PC-3 (cell line): ENCODE measurements at regions of chr12 and their contacts with region 1.

Region 1: DNA sequence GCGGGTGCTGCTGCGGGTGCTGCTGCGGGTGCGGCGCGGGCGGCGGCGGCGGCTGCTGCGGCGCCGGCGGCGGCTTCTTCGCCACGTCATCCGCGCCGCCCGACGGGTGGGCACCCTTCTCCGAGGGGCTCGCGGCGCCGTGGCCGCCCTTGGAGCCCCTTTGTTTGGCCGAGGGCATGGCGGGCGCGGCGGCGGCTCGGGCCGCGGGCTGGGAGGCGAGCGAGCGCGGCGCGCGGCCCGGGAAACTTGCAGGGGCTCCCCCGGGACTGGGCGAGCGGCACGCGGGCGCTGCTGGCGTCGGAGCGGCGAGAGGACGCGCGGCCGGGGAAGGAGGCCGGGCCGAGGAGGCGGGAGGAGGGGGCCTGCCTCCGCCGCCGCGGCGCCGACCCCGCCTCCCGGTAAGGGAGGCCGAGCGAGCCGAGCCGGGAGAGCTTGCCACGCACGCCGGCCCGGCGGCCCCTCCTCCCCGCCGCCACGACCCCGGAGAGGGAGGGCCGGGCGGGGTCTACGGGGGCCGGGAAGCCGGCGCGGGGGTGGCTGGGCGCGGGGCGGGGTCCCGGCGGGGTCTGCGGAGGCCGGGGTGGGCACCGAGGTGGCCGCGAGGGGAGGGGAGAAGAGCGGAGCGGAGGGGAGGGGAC is at the start of gene CKAP4:
- DNase-seq: peak; percentile 82
- ATAC-seq: peak; percentile 63
- H3K4me3 ChIP-seq: peak within 1 kb of the TSS; percentile 73
- H3K27ac ChIP-seq: peak within 1 kb of the TSS; percentile 93
- H3K4me1 ChIP-seq: peaks cover 24% of the 10 kb centered on the region
- H3K27me3 ChIP-seq: no peaks in the 10 kb centered on the region
- CTCF ChIP-seq: no peak
- total RNA-seq, gene CKAP4: 76.3 and 99.1 TPM in 2 replicates

Region 2: GRCh38 chr12:104816845-104817503 is 1430.8 kb before region 1 on chr12:
- CTCF ChIA-PET with region 1: no interaction called
- POLR2A ChIA-PET with region 1: no interaction called
- intact Hi-C with region 1: no loop called
- DNase-seq: peak; percentile 48
- ATAC-seq: peak; percentile 65
- H3K4me3 ChIP-seq: no peak overlapping the region
- H3K27ac ChIP-seq: no peak overlapping the region
- H3K4me1 ChIP-seq: no peaks in the 10 kb centered on the region
- H3K27me3 ChIP-seq: no peaks in the 10 kb centered on the region
- CTCF ChIP-seq: no peak

Region 3: GRCh38 chr12:106195621-106196027 is 52.2 kb before region 1 on chr12:
- CTCF ChIA-PET with region 1: no interaction called
- POLR2A ChIA-PET with region 1: no interaction called
- intact Hi-C with region 1: no loop called
- DNase-seq: no peak
- ATAC-seq: no peak
- H3K4me3 ChIP-seq: no peak overlapping the region
- H3K27ac ChIP-seq: no peak overlapping the region
- H3K4me1 ChIP-seq: no peaks in the 10 kb centered on the region
- H3K27me3 ChIP-seq: peaks cover 16% of the 10 kb centered on the region; the same call in 1 of the 2 replicates
- CTCF ChIP-seq: no peak

Region 4: GRCh38 chr12:106223485-106224354 is 24.1 kb before region 1 on chr12:
- CTCF ChIA-PET with region 1: interaction called, 3 read pairs
- POLR2A ChIA-PET with region 1: no interaction called
- intact Hi-C with region 1: loop called (anchors 1 kb)
- DNase-seq: peak; percentile 89
- ATAC-seq: peak; percentile 80
- H3K4me3 ChIP-seq: no peak overlapping the region
- H3K27ac ChIP-seq: no peak overlapping the region
- H3K4me1 ChIP-seq: peaks cover 11% of the 10 kb centered on the region
- H3K27me3 ChIP-seq: no peaks in the 10 kb centered on the region
- CTCF ChIP-seq: peak; percentile 94

Region 5: DNA sequence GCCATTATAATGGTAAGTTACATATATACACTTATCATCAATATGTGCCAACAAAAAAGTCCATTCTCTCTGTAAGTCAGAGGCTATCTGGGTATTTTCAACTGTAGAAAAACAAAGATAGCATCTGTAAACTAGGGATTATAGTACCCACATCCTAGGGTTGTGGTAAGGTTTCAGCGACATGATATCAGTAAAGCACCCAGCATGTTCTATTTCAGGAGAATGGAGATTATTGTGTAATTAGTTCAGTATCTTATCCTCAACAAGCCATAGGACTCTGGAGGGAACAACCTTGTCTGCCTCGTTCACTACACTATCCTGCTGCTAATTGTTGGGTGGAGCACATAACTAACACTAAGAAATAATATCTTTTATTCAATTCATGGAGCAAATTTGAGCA is 19.7 kb after region 1 on chr12:
- CTCF ChIA-PET with region 1: no interaction called
- POLR2A ChIA-PET with region 1: no interaction called
- intact Hi-C with region 1: no loop called
- DNase-seq: no peak
- ATAC-seq: no peak
- H3K4me3 ChIP-seq: no peak overlapping the region
- H3K27ac ChIP-seq: no peak overlapping the region
- H3K4me1 ChIP-seq: no peaks in the 10 kb centered on the region
- H3K27me3 ChIP-seq: no peaks in the 10 kb centered on the region
- CTCF ChIP-seq: no peak

Region 6: GRCh38 chr12:106282457-106283097 is 34.8 kb after region 1 on chr12:
- CTCF ChIA-PET with region 1: interaction called, 3 read pairs
- POLR2A ChIA-PET with region 1: interaction called, 5 read pairs
- intact Hi-C with region 1: loop called (anchors 1 kb)
- DNase-seq: peak; percentile 78
- ATAC-seq: peak; percentile 71
- H3K4me3 ChIP-seq: no peak overlapping the region
- H3K27ac ChIP-seq: no peak overlapping the region
- H3K4me1 ChIP-seq: peaks cover 33% of the 10 kb centered on the region
- H3K27me3 ChIP-seq: no peaks in the 10 kb centered on the region
- CTCF ChIP-seq: peak; percentile 94

Region 7: DNA sequence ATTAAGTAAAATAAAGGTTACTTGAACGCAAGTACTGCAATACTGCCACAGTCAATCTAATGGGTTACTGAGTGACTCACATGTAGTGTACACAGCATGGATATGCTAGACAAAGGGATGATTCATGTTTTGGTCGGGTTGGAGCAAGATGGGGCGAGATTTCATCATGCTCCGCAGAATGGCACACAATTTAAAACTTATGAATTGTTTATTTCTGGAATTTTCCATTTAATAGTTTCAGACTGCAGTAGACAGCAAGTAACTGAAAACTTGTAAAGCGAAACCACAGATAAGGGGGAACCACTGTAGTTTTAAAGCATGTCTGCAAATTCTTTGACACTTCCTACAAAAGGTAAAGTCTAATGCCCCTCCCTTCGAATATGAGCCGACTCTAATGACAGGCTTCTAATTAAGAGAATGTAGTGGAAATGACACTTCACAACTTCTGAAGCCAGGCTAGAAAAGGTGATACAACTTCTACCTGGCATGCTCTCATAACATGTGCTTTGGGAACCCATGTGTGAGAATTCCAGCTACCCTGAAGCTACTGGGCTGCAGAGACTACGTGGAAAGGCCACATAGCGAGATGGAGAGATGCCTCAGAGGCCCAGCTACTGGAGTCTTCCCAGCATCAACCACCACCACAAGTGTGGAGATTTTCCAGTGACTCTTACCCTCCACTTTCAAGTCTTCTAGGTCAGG is 40.9 kb after region 1 on chr12:
- CTCF ChIA-PET with region 1: no interaction called
- POLR2A ChIA-PET with region 1: interaction called, 5 read pairs
- intact Hi-C with region 1: loop called (anchors 1 kb)
- DNase-seq: peak; percentile 97
- ATAC-seq: peak; percentile 92
- H3K4me3 ChIP-seq: no peak overlapping the region
- H3K27ac ChIP-seq: peak overlapping the region; percentile 96
- H3K4me1 ChIP-seq: peaks cover 50% of the 10 kb centered on the region
- H3K27me3 ChIP-seq: no peaks in the 10 kb centered on the region
- CTCF ChIP-seq: no peak

Region 8: DNA sequence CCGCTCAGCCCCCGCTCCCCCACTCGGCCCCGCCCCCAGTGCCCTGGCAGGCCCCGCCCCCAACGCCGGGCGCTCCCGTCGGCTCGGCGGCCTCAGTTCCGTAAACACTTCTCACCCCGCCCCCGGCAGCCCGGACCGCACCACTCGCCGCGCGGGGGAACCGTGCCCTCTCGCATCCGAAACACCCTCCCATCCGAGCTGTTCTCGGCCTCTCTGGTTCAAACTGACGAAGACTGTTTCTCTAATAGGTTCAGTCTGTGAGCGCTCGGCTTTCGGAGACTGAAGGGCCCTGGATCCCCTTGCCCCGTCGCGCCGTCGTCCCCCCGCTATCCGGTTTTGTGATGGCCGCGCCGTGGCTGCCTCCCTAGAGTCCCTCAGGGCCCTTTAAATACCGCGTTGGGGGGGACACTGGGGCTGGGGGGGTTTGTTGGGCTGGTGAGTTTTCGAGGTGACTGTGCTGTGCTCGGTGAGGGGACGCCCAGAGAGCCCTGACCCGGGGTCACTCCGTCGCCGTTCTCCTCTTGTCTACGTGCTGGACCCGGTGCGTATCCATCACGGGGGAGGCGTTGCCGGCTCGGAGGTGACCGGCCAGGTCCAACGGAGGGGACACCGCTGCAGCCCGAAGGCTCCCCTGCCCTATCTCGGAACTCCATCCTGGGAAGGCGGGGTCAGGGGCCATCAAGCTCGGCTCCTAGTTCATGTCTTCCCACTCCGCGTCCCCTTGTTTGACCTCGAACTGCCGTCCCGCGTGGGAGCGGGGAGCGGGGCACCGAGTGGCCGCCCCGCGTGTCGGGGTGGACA is 54.8 kb after region 1 on chr12 and contains the start of gene TCP11L2:
- CTCF ChIA-PET with region 1: no interaction called
- POLR2A ChIA-PET with region 1: interaction called, 9 read pairs
- intact Hi-C with region 1: loop called (anchors 1 kb)
- DNase-seq: peak; percentile 77
- ATAC-seq: peak; percentile 59
- H3K4me3 ChIP-seq: peak within 1 kb of the TSS; percentile 80
- H3K27ac ChIP-seq: peak within 1 kb of the TSS; percentile 84
- H3K4me1 ChIP-seq: peaks cover 42% of the 10 kb centered on the region
- H3K27me3 ChIP-seq: no peaks in the 10 kb centered on the region
- CTCF ChIP-seq: no peak
- total RNA-seq, gene TCP11L2: 10.1 and 12.1 TPM in 2 replicates

Region 9: GRCh38 chr12:106345739-106346138 is 97.9 kb after region 1 on chr12:
- CTCF ChIA-PET with region 1: no interaction called
- POLR2A ChIA-PET with region 1: no interaction called
- intact Hi-C with region 1: loop called (anchors 5 kb)
- DNase-seq: peak; percentile 76
- ATAC-seq: peak; percentile 54
- H3K4me3 ChIP-seq: no peak overlapping the region
- H3K27ac ChIP-seq: no peak overlapping the region
- H3K4me1 ChIP-seq: peaks cover 15% of the 10 kb centered on the region
- H3K27me3 ChIP-seq: no peaks in the 10 kb centered on the region
- CTCF ChIP-seq: peak; percentile 75

Region 10: GRCh38 chr12:106357549-106358395 is 110.0 kb after region 1 on chr12 and contains the start of gene POLR3B:
- CTCF ChIA-PET with region 1: no interaction called
- POLR2A ChIA-PET with region 1: interaction called, 10 read pairs
- intact Hi-C with region 1: loop called (anchors 5 kb)
- DNase-seq: peak; percentile 97
- ATAC-seq: peak; percentile 85
- H3K4me3 ChIP-seq: peak within 1 kb of the TSS; percentile 82
- H3K27ac ChIP-seq: peak within 1 kb of the TSS; percentile 70
- H3K4me1 ChIP-seq: peaks cover 18% of the 10 kb centered on the region
- H3K27me3 ChIP-seq: no peaks in the 10 kb centered on the region
- CTCF ChIP-seq: peak; percentile 93
- total RNA-seq, gene POLR3B: 23.4 and 24.3 TPM in 2 replicates

Region 11: DNA sequence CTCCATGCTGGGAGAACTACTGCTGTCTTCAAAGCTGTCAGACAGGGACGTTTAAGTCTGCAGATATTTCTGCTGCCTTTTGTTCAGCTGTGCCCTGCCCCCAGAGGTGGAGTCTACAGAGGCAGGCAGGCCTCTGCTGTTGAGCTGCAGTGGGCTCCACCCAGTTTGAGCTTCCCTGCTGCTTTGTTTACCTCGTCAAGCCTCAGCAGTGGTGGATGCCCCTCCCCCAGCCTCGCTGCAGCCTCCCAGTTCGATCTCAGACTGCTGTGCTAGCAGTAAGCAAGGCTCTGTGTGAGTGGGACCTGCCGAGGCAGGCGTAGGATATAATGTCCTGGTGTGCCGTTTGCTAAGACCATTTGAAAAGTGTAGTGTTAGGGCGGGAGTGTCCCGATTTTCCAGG is 303.6 kb after region 1 on chr12:
- CTCF ChIA-PET with region 1: no interaction called
- POLR2A ChIA-PET with region 1: no interaction called
- intact Hi-C with region 1: no loop called
- DNase-seq: peak; percentile 8
- ATAC-seq: no peak
- H3K4me3 ChIP-seq: no peak overlapping the region
- H3K27ac ChIP-seq: no peak overlapping the region
- H3K4me1 ChIP-seq: no peaks in the 10 kb centered on the region
- H3K27me3 ChIP-seq: peaks cover 6% of the 10 kb centered on the region; the same call in 1 of the 2 replicates
- CTCF ChIP-seq: no peak